T-cell (primary cell): ENCODE measurements at regions of chr19 and their contacts with region 1.

Region 1: DNA sequence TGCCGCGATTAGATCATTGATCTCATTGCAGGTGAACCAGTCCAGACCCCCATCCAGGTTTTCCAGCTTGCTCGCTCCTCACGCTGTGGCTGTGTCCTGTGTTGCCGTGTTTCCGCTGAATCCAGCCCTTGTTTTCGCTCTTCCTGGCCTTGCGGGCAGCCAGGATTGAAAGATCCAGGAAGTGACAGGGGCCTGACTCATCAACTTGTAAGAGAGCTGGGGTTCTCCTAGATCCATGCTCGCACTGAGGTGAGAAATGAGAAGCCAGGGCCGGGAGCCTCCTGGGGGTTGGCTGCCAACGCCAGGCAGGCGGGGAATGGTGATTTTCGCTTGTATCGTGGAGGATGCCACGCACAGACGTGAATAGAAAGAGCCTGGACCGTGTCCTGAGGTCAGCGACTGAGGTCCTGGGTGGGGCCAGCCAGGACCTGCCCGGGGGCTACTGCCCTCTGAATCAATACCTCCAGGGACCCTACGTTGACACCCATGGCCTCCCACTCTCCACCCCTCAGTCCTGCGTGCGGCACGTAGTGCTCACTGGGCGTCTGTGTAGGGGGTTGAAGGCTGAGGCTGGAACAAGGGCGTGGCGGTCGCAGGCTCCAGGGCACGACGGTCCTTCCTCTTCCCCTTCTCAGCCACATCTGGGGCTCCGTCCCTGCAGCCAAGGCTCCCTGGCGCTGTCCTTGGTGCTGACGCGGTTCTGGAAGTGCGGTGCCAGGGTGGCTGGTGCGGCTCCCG is 7.3 kb upstream of the PTPRH start:
- DNase-seq: peak in 27 of 35 experiments; percentile 6 to 62 (median 19)
- ATAC-seq: peak; percentile 40 to 59 (median 48)
- H3K4me3 ChIP-seq: no peak overlapping the region
- H3K4me3 Mint-ChIP-seq: peak overlapping the region in 1 of 3 donors; percentile 39
- H3K27ac ChIP-seq: no peak overlapping the region
- H3K27ac Mint-ChIP-seq: no peak overlapping the region
- H3K4me1 ChIP-seq: peaks cover 0 to 12% of the 10 kb centered on the region in 2 experiments
- H3K4me1 Mint-ChIP-seq: peaks cover 12 to 13% (median 13%) of the 10 kb centered on the region in 3 donors
- H3K27me3 ChIP-seq: peaks cover 0 to 43% of the 10 kb centered on the region in 2 experiments
- H3K27me3 Mint-ChIP-seq: peaks cover 22 to 25% of the 10 kb centered on the region in 2 donors

Region 2: DNA sequence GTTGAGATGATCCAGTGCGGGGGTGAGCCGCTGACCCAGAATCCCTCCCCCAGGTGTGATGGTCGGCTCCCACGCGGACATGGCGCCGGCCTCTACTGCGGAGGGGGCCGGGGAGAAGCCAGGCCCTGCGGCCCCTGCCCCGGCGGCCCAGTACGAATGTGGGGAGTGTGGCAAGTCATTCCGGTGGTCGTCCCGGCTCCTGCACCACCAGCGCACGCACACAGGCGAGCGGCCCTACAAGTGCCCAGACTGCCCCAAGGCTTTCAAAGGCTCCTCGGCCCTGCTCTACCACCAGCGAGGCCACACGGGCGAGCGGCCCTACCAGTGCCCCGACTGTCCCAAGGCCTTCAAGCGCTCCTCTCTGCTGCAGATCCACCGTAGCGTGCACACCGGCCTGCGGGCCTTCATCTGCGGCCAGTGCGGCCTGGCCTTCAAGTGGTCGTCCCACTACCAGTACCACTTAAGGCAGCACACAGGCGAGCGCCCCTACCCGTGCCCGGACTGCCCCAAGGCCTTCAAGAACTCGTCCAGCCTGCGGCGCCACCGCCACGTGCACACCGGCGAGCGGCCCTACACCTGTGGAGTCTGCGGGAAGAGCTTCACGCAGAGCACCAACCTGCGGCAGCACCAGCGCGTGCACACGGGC is 264.6 kb after region 1 on chr19:
- CTCF ChIA-PET with region 1: no interaction called
- POLR2A ChIA-PET with region 1: interaction called in 1 of 2 experiments, 11 read pairs
- DNase-seq: no peak
- ATAC-seq: no peak
- H3K4me3 ChIP-seq: no peak overlapping the region
- H3K4me3 Mint-ChIP-seq: no peak overlapping the region
- H3K27ac ChIP-seq: no peak overlapping the region
- H3K27ac Mint-ChIP-seq: no peak overlapping the region
- H3K4me1 ChIP-seq: peaks cover 7 to 46% of the 10 kb centered on the region in 2 experiments
- H3K4me1 Mint-ChIP-seq: peaks cover 29 to 40% (median 37%) of the 10 kb centered on the region in 3 donors
- H3K27me3 ChIP-seq: peaks cover 0 to 16% of the 10 kb centered on the region in 2 experiments
- H3K27me3 Mint-ChIP-seq: no peaks in the 10 kb centered on the region